ENCODE measurements at regions of chr2 and their contacts with region 1.

Region 1: DNA sequence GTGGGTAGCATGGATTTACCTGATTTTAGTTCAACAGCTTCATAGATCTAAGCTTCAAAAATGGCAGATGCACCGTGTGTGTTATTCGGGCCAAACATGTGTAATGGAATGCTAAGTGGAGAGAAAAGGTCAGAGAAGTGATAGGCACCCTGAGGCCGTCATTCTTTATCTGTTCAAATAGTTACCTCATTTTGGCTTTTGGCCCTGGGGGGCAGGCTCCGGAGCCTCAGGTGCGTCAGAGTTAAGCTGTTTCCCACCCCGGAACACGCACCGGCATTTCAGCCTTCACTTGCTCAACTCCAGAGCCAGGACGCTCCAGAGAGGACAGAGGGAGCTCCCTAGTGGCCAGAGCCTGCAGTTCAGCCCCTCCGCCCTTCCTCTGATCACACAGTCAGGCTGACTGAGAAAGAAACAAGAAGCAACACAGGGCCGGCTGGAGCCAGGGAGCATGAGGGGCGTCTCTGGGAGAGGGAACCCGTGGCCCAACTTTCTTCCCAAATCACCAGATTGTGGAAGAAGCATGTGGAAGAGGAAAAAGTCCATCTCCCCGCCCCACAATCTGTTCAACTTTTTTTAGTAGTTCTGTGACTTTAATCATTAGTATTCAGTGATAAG is 135.2 kb upstream of the EPC2 start:
- DNase-seq: peak; percentile 86 to 88 (median 87)
- H3K4me3 ChIP-seq: peak overlapping the region in 4 of 7 experiments; percentile 33 to 76 (median 59)
- H3K27ac ChIP-seq: peak overlapping the region in 1 of 2 experiments; percentile 39
- H3K4me1 ChIP-seq: peaks cover 2 to 34% (median 9%) of the 10 kb centered on the region in 4 experiments
- H3K27me3 ChIP-seq: no peaks in the 10 kb centered on the region

Region 2: DNA sequence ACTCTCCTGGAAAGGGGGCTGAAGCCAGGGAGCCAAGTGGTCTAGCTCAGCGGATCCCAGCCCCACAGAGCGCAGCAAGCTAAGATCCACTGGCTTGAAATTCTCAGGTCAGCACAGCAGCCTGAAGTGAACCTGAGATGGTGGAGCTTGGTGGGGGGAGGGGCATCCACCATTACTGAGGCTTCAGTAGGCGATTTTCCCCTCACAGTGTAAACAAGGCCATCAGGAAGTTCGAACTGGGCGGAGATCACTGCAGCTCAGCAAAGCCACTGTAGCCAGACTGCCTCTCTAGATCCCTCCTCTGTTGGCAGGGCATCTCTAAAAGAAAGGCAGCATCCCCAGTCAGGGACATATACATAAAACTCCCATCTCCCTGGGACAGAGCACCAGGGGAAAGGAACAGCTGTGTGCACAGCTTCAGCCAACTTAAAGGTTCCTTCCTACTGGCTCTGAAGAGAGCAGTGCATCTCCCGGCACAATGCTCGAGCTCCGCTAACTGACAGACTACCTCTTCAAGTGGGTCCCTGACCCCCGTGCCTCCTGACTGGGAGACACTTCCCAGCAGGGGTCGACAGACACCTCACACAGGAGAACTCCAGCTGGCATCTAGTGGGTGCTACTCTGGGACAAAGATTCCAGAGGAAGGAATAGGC is 147.1 kb before region 1 on chr2:
- CTCF ChIA-PET with region 1: no interaction called
- POLR2A ChIA-PET with region 1: no interaction called
- DNase-seq: no peak
- H3K4me3 ChIP-seq: no peak overlapping the region
- H3K27ac ChIP-seq: no peak overlapping the region
- H3K4me1 ChIP-seq: peaks cover 0 to 4% (median 2%) of the 10 kb centered on the region in 4 experiments
- H3K27me3 ChIP-seq: no peaks in the 10 kb centered on the region

Region 3: DNA sequence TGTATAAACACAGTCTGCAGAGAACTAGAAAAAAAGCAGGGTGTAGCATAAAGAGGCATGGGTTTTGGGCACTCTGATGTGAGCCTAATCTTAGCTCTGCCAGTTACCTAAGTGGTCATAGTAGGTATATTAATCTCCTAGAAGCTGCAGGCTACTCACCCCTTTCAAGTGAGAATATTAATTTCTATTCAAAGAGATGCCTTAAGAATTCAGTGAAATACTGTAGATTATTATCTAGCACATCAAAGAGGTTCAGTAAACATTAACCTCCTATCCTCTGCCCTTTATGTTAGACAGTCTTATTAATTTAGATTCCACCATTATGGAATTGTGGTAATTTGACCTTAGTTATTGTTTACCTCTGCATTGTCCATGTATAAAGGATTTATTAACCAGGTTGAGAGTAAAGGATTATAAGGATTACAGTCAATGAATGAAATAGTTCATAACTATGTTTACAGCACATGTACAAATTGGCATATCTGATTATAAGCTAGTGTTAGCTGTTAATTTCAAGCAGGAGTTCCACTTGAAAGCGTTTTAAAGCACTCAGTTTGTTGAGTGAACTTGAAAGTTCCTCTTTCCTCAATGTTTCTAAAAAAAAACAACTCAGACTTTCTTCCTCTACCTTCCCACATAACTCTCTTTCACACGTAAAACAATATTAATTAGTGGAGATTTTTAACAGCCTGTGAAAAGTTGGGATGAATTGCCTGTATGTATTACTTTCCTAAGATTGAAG is 15.4 kb before region 1 on chr2:
- CTCF ChIA-PET with region 1: interaction called, 10 read pairs
- POLR2A ChIA-PET with region 1: no interaction called
- DNase-seq: peak in 2 of 3 donors; percentile 23 to 26
- H3K4me3 ChIP-seq: no peak overlapping the region
- H3K27ac ChIP-seq: no peak overlapping the region
- H3K4me1 ChIP-seq: peaks cover 0 to 11% (median 5%) of the 10 kb centered on the region in 4 experiments
- H3K27me3 ChIP-seq: no peaks in the 10 kb centered on the region